ENCODE measurements at regions of chr5 and their contacts with region 1.

Region 1: GRCh38 chr5:174571662-174572397 is 152.6 kb upstream of the MSX2 start:
- DNase-seq: peak; percentile 63
- H3K4me3 ChIP-seq: no peak overlapping the region
- H3K27ac ChIP-seq: no peak overlapping the region
- H3K4me1 ChIP-seq: no peaks in the 10 kb centered on the region
- H3K27me3 ChIP-seq: no peaks in the 10 kb centered on the region
- CTCF ChIP-seq: peak in 1 of 4 experiments; percentile 23
- POLR2A ChIP-seq: no peak

Region 2: GRCh38 chr5:174724491-174725260 is 152.8 kb after region 1 on chr5 and contains the start of gene MSX2:
- intact Hi-C with region 1: loop called (anchors 5 kb)
- DNase-seq: peak; percentile 94
- H3K4me3 ChIP-seq: peak within 1 kb of the TSS; percentile 55 to 59
- H3K27ac ChIP-seq: peak within 1 kb of the TSS; percentile 70
- H3K4me1 ChIP-seq: no peaks in the 10 kb centered on the region
- H3K27me3 ChIP-seq: peaks cover 7% of the 10 kb centered on the region
- CTCF ChIP-seq: peak in 1 of 4 experiments; percentile 6
- POLR2A ChIP-seq: peak; percentile 87
- total RNA-seq, gene MSX2: 7.1 to 36.4 TPM

Region 3: DNA sequence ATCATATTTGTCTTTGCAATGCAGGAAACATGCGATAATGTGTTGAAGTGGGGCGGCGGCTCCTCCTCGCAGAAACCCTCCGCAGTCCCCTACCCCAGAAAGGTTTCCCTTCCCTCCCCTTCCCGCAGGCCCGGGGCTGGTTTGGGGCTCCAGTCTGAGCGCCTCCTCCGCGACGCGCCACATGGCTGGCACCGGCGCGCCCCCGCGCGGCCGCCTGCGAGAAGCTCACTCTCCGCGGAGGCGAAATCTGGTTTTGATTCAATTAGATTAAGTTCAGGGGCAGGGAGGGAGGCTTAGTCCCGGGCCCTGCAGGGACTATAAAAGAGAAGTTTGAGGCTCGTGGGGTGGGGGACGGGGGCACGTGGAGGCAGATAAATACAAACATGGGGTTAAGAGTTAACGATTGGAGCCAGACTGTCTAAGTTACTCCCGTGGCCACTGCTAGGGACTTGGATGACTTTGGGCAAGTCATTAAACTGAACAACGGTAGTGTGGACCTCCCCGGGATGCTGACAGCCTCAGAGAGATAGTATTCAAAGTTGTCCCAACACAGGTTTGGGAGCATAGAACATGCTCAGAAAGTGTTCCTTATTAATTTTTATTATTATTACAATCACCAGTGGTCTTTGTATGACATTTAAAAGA is 222.0 kb after region 1 on chr5:
- intact Hi-C with region 1: loop called (anchors 5 kb)
- DNase-seq: peak; percentile 35
- H3K4me3 ChIP-seq: no peak overlapping the region
- H3K27ac ChIP-seq: no peak overlapping the region
- H3K4me1 ChIP-seq: no peaks in the 10 kb centered on the region
- H3K27me3 ChIP-seq: no peaks in the 10 kb centered on the region
- CTCF ChIP-seq: peak; percentile 57 to 81 (median 71)
- POLR2A ChIP-seq: no peak

Measured in prostate gland (tissue), 2 donors.